ENCODE measurements at regions of chr3 and their contacts with region 1.

Region 1: DNA sequence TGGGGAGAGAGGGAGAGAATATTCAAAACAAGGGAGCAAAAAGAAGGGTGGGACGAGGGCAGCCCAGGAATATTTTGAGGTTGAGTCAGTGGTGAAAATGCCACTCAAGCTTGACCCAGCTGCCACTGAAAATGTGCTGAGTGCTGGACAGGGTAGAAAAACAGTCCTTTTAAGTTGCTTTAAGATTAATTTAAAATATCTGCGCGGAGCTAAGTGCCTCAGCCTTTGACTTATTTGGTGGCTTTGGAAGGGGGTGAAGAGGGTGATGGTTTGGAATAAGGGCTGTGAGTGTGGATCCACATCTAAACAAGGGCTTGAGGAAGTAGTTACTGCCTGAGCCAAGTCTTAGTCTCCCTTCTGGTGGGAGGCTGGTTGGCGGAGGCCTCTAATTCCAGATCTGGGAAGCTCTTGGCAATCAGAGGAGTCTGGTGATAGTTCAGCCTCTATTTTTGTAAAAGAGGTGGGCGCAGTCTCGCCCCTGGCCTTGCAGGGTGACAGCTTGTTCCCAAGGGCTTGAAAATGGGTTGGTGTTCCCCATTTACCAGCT is 280.8 kb upstream of the ROPN1 start:
- DNase-seq: peak; percentile 82 to 83
- ATAC-seq: peak; percentile 72
- H3K4me3 ChIP-seq: no peak overlapping the region
- H3K27ac ChIP-seq: peak overlapping the region; percentile 85 to 96
- H3K4me1 ChIP-seq: peaks cover 6 to 20% of the 10 kb centered on the region in 2 donors
- H3K27me3 ChIP-seq: no peaks in the 10 kb centered on the region

Region 2: DNA sequence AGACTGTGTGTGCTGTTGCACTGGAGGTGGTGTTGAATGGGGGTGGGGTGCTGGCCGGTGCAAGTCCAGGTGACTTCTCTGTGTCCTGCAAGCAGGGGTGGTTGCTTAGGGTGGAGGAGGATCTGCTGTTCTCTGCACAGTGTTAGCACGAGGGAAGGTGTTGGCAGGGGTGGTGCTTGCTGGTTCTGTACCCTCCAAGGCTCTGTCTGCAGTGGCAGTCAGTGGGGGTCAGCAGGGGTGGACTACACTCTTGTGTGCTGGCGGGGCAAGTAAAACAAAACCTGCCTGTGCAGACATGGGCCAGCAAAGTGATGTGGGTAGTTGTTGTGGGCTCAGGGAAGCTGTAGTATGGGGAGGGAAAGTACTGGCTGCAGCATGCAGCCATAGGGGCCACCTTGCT is 286.3 kb before region 1 on chr3:
- intact Hi-C with region 1: no loop called
- DNase-seq: no peak
- ATAC-seq: peak; percentile 13
- H3K4me3 ChIP-seq: no peak overlapping the region
- H3K27ac ChIP-seq: no peak overlapping the region
- H3K4me1 ChIP-seq: peaks cover 0 to 6% of the 10 kb centered on the region in 2 donors
- H3K27me3 ChIP-seq: no peaks in the 10 kb centered on the region

Region 3: DNA sequence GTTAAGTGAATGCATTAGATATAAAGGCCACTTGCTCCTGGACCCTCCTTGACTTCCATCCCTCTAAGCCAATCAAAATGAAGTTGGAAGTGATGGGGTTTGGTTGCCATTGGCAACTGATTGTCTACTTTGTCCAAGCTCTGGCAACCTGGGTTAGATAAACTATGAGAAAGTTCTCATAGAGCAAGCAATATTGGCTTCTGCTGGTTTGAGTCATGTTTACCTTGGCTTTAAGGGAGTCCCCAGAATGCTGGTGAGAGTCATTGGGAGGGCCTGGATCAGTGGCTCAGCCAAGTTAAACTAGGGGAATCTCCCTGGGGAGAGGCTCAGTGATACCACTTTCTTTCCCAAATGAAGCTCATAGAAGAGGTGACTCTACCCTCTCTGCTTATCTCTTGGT is 104.4 kb before region 1 on chr3:
- intact Hi-C with region 1: loop called in 1 of 2 experiments (anchors 5 kb)
- DNase-seq: peak in 1 of 2 donors; percentile 59
- ATAC-seq: peak; percentile 89
- H3K4me3 ChIP-seq: no peak overlapping the region
- H3K27ac ChIP-seq: no peak overlapping the region
- H3K4me1 ChIP-seq: peaks cover 5 to 17% of the 10 kb centered on the region in 2 donors
- H3K27me3 ChIP-seq: no peaks in the 10 kb centered on the region

Region 4: DNA sequence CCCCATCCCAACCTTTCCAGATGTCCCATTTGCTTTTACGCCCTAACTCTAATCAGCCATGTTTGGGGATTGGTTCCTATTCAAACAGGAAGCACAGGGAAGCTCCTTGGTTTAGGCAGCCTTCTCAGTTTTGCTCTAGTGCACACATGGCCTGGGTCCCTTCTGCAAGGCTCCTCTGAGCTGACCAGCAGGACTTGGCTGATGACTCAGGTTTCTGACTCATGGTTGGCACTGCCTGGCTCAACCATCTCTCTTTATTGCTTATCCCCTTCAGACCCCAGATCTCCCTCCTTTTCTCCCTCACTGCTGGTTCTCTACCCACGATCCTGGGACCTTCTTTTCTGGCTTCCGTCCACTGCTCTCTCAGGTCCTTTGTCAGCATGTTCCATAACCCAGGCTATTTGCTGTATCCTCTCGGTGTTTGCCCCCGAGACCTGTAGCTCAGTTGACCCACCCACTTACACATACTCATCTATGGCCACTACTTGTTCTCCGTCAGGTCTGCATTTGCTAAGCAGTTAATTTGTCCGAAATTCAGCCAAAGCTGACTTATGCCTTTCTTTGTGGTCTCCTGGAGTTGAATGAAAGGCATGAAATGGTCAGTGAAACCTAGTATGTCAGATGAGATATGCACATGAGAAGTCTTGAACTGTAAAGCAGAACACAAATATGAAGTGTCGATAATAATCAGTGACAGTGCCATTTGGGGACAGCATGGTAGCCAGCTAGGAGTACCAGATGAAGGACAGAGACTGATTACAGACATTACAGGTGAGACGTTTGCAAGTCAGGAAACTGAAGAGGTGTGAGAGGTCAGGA is 42.7 kb after region 1 on chr3:
- intact Hi-C with region 1: no loop called
- DNase-seq: peak in 1 of 2 donors; percentile 73
- ATAC-seq: peak; percentile 77
- H3K4me3 ChIP-seq: no peak overlapping the region
- H3K27ac ChIP-seq: peak overlapping the region in 1 of 2 donors; percentile 52
- H3K4me1 ChIP-seq: peaks cover 3% of the 10 kb centered on the region in 2 donors
- H3K27me3 ChIP-seq: no peaks in the 10 kb centered on the region